Activated naive CD8-positive, alpha-beta T cell treated with anti-CD3 and anti-CD28 coated beads, Interleukin-2, amount 10 ng/mL, durations not matched to agents 7 days and 5 days (primary cell): ENCODE measurements at regions of chr17 and their contacts with region 1.

Region 1: DNA sequence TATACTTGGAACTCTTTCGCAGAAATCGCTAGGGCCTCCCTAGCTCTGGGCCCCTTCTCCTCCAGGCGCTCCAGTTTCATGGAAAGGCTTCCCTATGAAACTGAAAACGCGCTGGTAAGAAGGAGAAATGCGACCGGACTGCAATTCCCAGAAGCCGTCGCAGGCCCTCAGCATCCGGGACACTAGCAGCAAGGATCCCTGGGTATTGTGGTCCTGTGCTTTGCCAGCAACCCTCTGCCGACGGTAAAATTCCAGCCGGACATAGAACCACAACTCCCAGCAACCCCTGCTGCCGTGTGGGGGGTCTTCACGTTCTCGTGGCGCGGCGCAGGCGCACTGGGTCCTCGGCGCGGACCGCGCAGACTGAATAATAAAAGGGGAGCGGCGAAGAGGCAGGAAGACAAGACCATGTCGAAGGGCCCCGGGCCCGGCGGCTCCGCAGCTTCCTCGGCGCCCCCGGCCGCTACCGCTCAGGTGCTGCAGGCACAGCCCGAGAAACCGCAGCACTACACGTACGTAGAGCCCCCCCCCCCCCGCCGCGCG is at the start of gene UNK:
- DNase-seq: peak; percentile 95
- ATAC-seq: peak; percentile 65
- H3K4me3 Mint-ChIP-seq: peak within 1 kb of the TSS; percentile 94
- H3K27ac Mint-ChIP-seq: peak within 1 kb of the TSS; percentile 99
- H3K4me1 Mint-ChIP-seq: peaks cover 36% of the 10 kb centered on the region
- H3K27me3 Mint-ChIP-seq: no peaks in the 10 kb centered on the region
- total RNA-seq, gene UNK: 37.4 to 39.8 TPM

Region 2: GRCh38 chr17:75417054-75417580 is 367.4 kb before region 1 on chr17:
- POLR2A ChIA-PET with region 1: no interaction called
- DNase-seq: no peak
- ATAC-seq: no peak
- H3K4me3 Mint-ChIP-seq: no peak overlapping the region
- H3K27ac Mint-ChIP-seq: no peak overlapping the region
- H3K4me1 Mint-ChIP-seq: peaks cover 18% of the 10 kb centered on the region
- H3K27me3 Mint-ChIP-seq: peaks cover 28% of the 10 kb centered on the region

Region 3: DNA sequence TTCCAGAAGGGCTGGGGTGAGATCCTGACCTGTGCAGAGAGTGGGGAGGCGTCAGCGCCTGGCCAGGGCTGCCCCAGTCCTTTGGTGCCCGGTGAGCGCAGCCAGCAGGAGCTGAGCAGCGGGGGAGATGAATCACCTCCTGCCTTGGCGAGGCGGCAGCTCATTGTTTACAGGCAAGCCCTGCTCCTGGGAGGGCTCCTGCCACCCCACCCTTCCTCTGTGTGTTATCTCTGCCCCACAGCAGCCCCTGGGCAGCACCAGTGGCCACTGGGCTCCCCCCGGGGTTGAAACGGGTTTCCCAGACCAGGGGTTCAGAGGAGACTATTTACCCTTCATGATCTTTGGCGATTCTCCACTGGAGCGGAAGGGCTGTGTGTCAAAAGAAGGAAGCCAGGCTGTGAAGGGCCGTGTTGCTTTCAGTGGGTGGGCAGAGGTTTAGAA is 77.4 kb before region 1 on chr17:
- POLR2A ChIA-PET with region 1: no interaction called
- DNase-seq: no peak
- ATAC-seq: no peak
- H3K4me3 Mint-ChIP-seq: no peak overlapping the region
- H3K27ac Mint-ChIP-seq: no peak overlapping the region
- H3K4me1 Mint-ChIP-seq: peaks cover 2% of the 10 kb centered on the region
- H3K27me3 Mint-ChIP-seq: peaks cover 9% of the 10 kb centered on the region

Region 4: GRCh38 chr17:75731716-75732498 is 52.6 kb before region 1 on chr17:
- POLR2A ChIA-PET with region 1: no interaction called
- DNase-seq: no peak
- ATAC-seq: no peak
- H3K4me3 Mint-ChIP-seq: no peak overlapping the region
- H3K27ac Mint-ChIP-seq: no peak overlapping the region
- H3K4me1 Mint-ChIP-seq: peaks cover 5% of the 10 kb centered on the region
- H3K27me3 Mint-ChIP-seq: no peaks in the 10 kb centered on the region

Region 5: GRCh38 chr17:75764711-75765421 is 19.7 kb before region 1 on chr17 and contains the start of gene GALK1:
- POLR2A ChIA-PET with region 1: interaction called, 129 read pairs
- DNase-seq: peak; percentile 83
- ATAC-seq: peak; percentile 97
- H3K4me3 Mint-ChIP-seq: peak within 1 kb of the TSS; percentile 87
- H3K27ac Mint-ChIP-seq: peak within 1 kb of the TSS; percentile 77
- H3K4me1 Mint-ChIP-seq: peaks cover 8% of the 10 kb centered on the region
- H3K27me3 Mint-ChIP-seq: peaks cover 3% of the 10 kb centered on the region
- total RNA-seq, gene GALK1: 50.4 to 53.0 TPM

Region 6: DNA sequence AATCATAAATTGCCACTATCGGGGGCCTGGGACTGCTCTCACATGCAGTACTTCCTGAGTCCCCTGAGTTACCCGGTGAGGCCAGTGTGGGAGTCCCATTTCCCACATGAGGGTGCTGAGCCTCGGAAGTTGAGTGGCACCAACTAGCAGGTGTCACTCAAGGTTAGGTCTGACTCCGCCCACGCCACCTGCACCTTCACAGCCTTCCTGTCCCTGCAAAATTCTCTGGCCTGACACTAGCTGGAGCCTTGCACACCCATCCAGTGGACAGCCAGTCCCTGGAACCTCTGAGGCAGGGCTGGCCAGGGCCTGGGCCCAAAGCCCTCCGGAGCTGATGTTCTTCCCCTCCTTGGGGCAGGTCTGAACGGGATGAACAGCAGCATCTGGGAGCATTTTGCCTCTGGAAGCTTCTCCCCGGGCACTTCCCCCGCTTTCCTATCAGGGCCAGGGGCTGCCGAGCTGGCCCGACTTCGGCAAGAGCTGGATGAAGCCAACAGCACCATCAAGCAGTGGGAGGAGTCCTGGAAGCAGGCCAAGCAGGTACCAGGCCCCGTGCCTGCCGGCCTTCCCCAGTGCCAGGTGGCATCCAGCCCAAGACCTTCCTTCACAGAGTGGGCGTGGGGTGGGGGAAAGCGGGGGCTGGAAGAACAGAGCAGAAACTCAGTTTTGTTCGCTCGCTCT is 37.7 kb after region 1 on chr17:
- POLR2A ChIA-PET with region 1: interaction called, 121 read pairs
- DNase-seq: no peak
- ATAC-seq: peak; percentile 50
- H3K4me3 Mint-ChIP-seq: no peak overlapping the region
- H3K27ac Mint-ChIP-seq: peak overlapping the region; percentile 87
- H3K4me1 Mint-ChIP-seq: peaks cover 17% of the 10 kb centered on the region
- H3K27me3 Mint-ChIP-seq: no peaks in the 10 kb centered on the region

Region 7: DNA sequence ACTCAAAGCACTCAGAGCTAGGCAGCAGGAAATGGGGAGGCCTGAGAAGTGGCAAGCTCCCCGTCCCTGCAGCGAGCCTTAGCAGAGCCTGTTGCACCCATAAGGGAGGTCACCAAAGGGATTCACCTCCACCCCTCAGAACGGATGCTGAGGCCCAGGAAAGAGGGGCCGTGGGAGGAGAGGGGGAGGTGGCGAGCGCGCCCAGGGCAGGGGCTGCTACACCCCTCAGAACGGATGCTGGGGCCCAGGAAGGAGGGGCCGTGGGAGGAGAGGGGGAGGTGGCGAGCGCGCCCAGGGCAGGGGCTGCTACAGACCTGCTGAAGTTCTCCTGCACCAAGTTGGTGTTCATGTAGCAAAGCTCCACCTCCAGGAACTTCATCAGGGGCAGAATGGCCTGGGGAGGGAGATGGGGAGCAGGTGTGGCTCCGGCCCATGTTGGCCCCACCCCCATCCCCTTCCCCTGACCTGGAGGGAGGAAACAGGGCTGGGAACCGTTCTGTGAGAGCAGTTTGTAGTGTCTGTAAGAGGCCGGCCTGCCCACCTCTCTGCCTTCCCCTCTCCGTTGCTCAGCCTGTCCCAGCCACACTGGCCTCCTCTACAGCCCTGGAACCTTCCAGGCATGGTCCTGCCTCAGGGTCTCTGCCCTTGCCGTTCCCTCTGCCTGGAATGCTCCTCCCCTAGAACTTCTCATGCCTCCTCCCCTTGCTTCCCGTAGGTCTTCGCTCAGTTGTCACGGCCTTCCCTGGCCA is 48.3 kb after region 1 on chr17:
- POLR2A ChIA-PET with region 1: interaction called, 121 read pairs
- DNase-seq: peak; percentile 68
- ATAC-seq: peak; percentile 69
- H3K4me3 Mint-ChIP-seq: peak overlapping the region; percentile 79
- H3K27ac Mint-ChIP-seq: peak overlapping the region; percentile 92
- H3K4me1 Mint-ChIP-seq: peaks cover 33% of the 10 kb centered on the region
- H3K27me3 Mint-ChIP-seq: no peaks in the 10 kb centered on the region

Region 8: GRCh38 chr17:75877752-75878173 is 93.2 kb after region 1 on chr17:
- POLR2A ChIA-PET with region 1: interaction called, 46 read pairs
- DNase-seq: peak; percentile 84
- ATAC-seq: peak; percentile 70
- H3K4me3 Mint-ChIP-seq: peak overlapping the region; percentile 91
- H3K27ac Mint-ChIP-seq: peak overlapping the region; percentile 93
- H3K4me1 Mint-ChIP-seq: peaks cover 28% of the 10 kb centered on the region
- H3K27me3 Mint-ChIP-seq: peaks cover 12% of the 10 kb centered on the region